ENCODE measurements at regions of chr17 and their contacts with region 1.

Region 1: DNA sequence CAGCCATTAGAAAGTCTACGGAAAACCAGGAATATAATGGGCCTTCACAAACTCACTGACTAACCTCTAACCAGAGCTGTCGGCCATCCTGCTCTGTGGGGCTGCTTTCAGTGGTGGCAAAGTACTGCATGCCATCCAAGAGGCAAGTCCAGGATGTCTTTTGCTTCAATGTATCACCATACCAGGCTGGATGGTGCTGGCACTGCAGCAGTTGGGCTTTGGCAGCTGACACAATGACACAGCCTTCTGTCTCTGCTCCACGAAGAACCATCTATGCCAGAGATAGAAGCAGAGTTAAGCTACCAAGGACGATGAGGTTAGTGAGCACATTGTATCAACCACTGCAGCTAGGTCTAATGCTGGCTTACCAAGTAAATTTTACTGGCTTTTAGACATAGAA is 9.7 kb upstream of the RSKR start:
- DNase-seq: no peak
- H3K4me3 ChIP-seq: no peak overlapping the region
- H3K4me3 Mint-ChIP-seq: no peak overlapping the region
- H3K27ac ChIP-seq: no peak overlapping the region
- H3K27ac Mint-ChIP-seq: peak overlapping the region in 1 of 8 donors; percentile 54
- H3K4me1 ChIP-seq: no peaks in the 10 kb centered on the region
- H3K4me1 Mint-ChIP-seq: peaks cover 0 to 5% (median 4%) of the 10 kb centered on the region in 3 donors
- H3K27me3 ChIP-seq: no peaks in the 10 kb centered on the region
- H3K27me3 Mint-ChIP-seq: peaks cover 0 to 1% of the 10 kb centered on the region in 2 donors

Region 2: DNA sequence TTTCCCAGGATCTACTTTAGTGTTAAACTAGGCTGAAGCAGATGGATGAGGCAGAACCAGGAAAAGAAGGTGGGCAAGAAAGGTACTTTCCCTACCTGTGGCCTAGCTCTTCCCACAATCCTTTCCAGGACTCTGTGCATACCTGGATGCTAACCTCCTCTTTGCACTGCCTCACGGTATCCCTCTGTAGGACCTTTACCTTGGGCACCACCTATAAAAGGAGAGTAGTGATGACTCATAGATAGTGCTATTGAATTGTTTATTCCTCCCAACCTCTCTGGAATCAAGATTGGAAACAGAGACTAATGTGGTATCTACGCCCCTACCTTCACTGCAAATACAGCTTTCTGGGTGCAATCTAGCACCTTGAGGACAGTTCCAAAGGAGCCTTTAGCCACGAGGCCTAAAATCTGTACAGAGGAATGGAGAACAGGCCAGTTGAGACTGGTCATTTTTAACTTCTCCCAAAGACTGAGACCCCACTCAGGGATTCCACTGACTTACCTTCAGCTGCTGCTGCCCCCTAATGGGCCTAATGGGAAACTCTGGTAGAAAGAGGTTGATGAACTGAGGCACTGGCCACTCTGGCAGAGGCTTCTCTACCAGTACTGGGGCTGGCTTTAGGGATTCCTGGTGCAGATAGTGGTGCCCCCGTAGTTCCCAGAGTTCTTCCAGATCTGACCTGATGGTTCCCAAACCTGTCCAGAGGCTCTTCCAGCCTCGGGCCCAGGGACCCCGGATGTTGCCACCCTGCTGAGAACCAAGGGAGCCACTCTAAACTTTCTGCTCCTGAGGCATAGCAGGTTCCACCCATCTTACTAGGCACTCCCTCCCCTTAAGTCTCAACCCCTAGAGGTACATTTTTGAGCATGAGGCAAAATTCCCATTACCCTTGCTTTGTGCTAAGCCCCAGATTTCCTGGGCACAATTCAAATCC is 10.5 kb before region 1 on chr17:
- CTCF ChIA-PET with region 1: interaction called, 21 read pairs
- POLR2A ChIA-PET with region 1: no interaction called
- DNase-seq: peak; percentile 6 to 59 (median 18)
- H3K4me3 ChIP-seq: no peak overlapping the region
- H3K4me3 Mint-ChIP-seq: no peak overlapping the region
- H3K27ac ChIP-seq: no peak overlapping the region
- H3K27ac Mint-ChIP-seq: peak overlapping the region in 4 of 8 donors; percentile 58 to 80 (median 70)
- H3K4me1 ChIP-seq: no peaks in the 10 kb centered on the region
- H3K4me1 Mint-ChIP-seq: peaks cover 0 to 6% (median 0%) of the 10 kb centered on the region in 3 donors
- H3K27me3 ChIP-seq: no peaks in the 10 kb centered on the region
- H3K27me3 Mint-ChIP-seq: no peaks in the 10 kb centered on the region